ENCODE measurements at regions of chr9 and their contacts with region 1.

Region 1: DNA sequence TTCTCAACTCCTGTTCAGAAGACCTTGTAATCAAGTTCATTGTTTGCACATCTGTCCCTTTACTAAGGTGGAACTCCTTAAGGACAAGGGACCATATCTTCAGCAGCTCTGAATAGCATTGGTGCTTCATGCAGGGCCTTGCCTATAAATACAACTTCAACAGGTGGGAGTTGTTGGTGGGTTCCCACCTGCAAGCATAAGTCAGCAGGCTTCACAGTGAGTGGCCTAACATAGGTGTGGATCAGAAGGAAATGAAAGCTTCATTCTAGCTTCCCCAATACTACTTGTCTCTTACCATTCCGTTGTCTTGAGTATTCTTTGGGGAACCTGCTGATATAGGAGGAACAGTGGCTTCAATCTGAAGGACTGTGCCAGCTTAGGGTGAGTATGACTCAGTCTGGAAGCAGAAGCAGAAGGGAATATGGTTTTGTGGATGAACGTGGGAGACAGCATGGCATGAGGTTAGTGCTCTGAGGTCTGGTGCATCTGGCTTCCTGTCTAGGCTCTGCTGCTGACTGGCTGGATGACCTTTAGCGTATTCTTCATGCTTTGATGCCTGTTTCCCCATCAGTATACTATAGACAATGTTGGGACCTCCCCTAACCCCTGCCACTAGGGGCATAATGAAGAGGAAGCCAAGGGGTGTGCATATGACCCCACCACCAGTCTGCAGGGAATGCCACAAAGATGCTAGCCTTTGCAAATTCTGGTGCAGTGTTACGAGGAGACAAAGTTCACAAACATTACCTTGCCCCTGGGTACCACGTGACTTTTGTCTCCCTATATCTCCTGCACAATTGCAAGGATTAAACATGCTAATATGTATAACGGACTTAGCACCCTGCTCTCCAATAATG is 192.3 kb downstream of the PALM2AKAP2 start:
- DNase-seq: peak; percentile 91
- ATAC-seq: peak; percentile 44
- H3K4me3 ChIP-seq: no peak overlapping the region
- H3K27ac ChIP-seq: peak overlapping the region; percentile 92
- H3K4me1 ChIP-seq: peaks cover 87% of the 10 kb centered on the region
- H3K27me3 ChIP-seq: no peaks in the 10 kb centered on the region
- CTCF ChIP-seq: peak; percentile 22 to 53 (median 42); a peak in 5 of 6 replicates
- EP300 ChIP-seq: no peak
- POLR2A ChIP-seq: peak; percentile 42
- RAD21 ChIP-seq: peak; percentile 41; the same call in 1 of the 2 replicates

Region 2: GRCh38 chr9:109411798-109412352 is 560.4 kb before region 1 on chr9:
- CTCF ChIA-PET with region 1: no interaction called
- POLR2A ChIA-PET with region 1: no interaction called
- RAD21 ChIA-PET with region 1: no interaction called
- SMC1A ChIA-PET with region 1: no interaction called
- in situ Hi-C with region 1: no loop called
- intact Hi-C with region 1: loop called (anchors 5 kb)
- DNase-seq: peak; percentile 75
- ATAC-seq: peak; percentile 55
- H3K4me3 ChIP-seq: no peak overlapping the region
- H3K27ac ChIP-seq: peak overlapping the region; percentile 77
- H3K4me1 ChIP-seq: peaks cover 52% of the 10 kb centered on the region
- H3K27me3 ChIP-seq: no peaks in the 10 kb centered on the region
- CTCF ChIP-seq: peak; percentile 94 to 97 (median 97); a peak in 5 of 6 replicates
- EP300 ChIP-seq: peak; percentile 92 to 96
- POLR2A ChIP-seq: no peak
- RAD21 ChIP-seq: peak; percentile 88

Region 3: GRCh38 chr9:109926421-109926869 is 45.8 kb before region 1 on chr9:
- CTCF ChIA-PET with region 1: interaction called, 4 read pairs
- POLR2A ChIA-PET with region 1: interaction called, 4 read pairs
- RAD21 ChIA-PET with region 1: interaction called, 43 read pairs
- SMC1A ChIA-PET with region 1: interaction called, 423 read pairs
- in situ Hi-C with region 1: no loop called
- intact Hi-C with region 1: no loop called
- DNase-seq: no peak
- ATAC-seq: peak; percentile 66
- H3K4me3 ChIP-seq: peak overlapping the region; percentile 8; the same call in 1 of the 2 replicates
- H3K27ac ChIP-seq: peak overlapping the region; percentile 45
- H3K4me1 ChIP-seq: peaks cover 10% of the 10 kb centered on the region
- H3K27me3 ChIP-seq: no peaks in the 10 kb centered on the region
- CTCF ChIP-seq: no peak
- EP300 ChIP-seq: no peak; a peak in 1 of 4 replicates
- POLR2A ChIP-seq: no peak
- RAD21 ChIP-seq: no peak

Region 4: GRCh38 chr9:109953813-109954497 is 18.3 kb before region 1 on chr9:
- CTCF ChIA-PET with region 1: interaction called, 18 read pairs
- POLR2A ChIA-PET with region 1: interaction called, 6 read pairs
- RAD21 ChIA-PET with region 1: interaction called, 26 read pairs
- SMC1A ChIA-PET with region 1: interaction called, 40 read pairs
- in situ Hi-C with region 1: no loop called
- intact Hi-C with region 1: no loop called
- DNase-seq: no peak
- ATAC-seq: no peak
- H3K4me3 ChIP-seq: no peak overlapping the region
- H3K27ac ChIP-seq: no peak overlapping the region
- H3K4me1 ChIP-seq: peaks cover 29% of the 10 kb centered on the region
- H3K27me3 ChIP-seq: no peaks in the 10 kb centered on the region
- CTCF ChIP-seq: 0 out of 6 replicates have a peak, but pooled peaks of 1 of the 3 experiments have one; percentile 18
- EP300 ChIP-seq: no peak
- POLR2A ChIP-seq: no peak
- RAD21 ChIP-seq: 0 out of 2 replicates have a peak, but pooled peaks have one; percentile 5

Region 5: DNA sequence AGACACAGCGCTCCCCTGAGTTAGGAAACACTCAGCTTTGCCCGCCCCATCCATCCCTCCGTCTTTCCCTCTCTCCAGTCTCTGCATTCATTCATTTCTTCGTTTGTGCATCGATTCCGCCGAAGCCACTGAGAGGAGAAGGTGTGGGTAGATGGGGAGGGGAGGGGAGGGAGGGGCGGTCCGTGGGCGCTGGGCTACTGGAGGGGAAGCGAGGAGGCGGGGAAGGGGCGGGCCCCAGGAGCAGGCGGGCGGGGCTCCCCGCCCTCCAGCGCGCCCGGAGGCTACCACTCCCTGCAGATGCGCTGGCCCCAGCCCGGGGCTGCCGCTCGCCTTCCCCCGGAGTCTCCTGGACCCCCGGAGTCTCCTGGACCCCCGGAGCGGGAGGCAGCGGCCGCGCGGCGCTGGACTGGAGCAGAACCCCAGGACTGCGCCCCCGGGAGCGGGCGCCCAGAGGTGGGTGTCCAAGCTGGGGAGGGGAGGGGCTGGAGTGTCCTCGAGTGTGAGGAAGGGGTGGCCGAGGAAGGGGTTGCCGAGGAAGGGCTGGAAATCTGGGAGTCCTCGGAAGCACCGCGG is 76.2 kb after region 1 on chr9:
- CTCF ChIA-PET with region 1: interaction called, 20 read pairs
- POLR2A ChIA-PET with region 1: interaction called, 59 read pairs
- RAD21 ChIA-PET with region 1: interaction called, 137 read pairs
- SMC1A ChIA-PET with region 1: interaction called, 30 read pairs
- in situ Hi-C with region 1: loop called (anchors 5 kb)
- intact Hi-C with region 1: loop called (anchors 1 kb)
- DNase-seq: peak; percentile 56
- ATAC-seq: peak; percentile 90
- H3K4me3 ChIP-seq: peak overlapping the region; percentile 100
- H3K27ac ChIP-seq: peak overlapping the region; percentile 87
- H3K4me1 ChIP-seq: 0 out of 2 replicates have a peak, but pooled peaks cover 4% of the 10 kb centered on the region
- H3K27me3 ChIP-seq: no peaks in the 10 kb centered on the region; a peak in 1 of 4 replicates
- CTCF ChIP-seq: no peak
- EP300 ChIP-seq: no peak
- POLR2A ChIP-seq: peak; percentile 88
- RAD21 ChIP-seq: no peak

Region 6: DNA sequence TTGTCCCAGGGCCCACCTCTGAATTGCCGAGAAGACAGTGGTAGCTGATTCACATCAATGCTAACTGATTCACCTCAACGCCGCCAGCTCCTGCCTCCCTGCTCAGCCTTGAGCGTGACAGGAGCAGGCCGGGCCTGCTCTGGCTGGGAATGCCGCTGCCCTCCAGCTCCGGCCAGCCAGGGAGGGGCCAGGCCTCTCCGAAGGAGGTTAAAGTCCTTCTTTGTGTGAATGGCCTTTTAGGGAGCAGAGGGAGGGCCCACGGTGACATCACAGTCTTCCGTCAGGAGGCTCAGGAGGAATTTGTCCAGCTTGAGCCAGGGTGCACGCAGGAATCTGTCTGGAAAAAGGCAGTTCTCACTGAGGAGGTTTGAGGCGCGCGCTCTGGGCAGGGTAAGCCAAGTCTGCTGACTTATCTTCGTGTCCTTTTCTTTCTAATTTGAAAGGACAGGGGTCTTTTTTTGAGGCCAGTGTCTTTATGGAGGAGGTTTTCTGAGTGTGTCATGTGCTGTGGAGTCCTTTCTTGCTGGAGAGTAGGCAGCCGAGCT is 153.0 kb after region 1 on chr9:
- CTCF ChIA-PET with region 1: interaction called, 12 read pairs
- POLR2A ChIA-PET with region 1: interaction called, 12 read pairs
- RAD21 ChIA-PET with region 1: interaction called, 42 read pairs
- SMC1A ChIA-PET with region 1: interaction called, 88 read pairs
- in situ Hi-C with region 1: no loop called
- intact Hi-C with region 1: loop called (anchors 2 kb)
- DNase-seq: no peak
- ATAC-seq: no peak
- H3K4me3 ChIP-seq: no peak overlapping the region
- H3K27ac ChIP-seq: peak overlapping the region; percentile 29
- H3K4me1 ChIP-seq: peaks cover 58% of the 10 kb centered on the region
- H3K27me3 ChIP-seq: no peaks in the 10 kb centered on the region
- CTCF ChIP-seq: no peak
- EP300 ChIP-seq: no peak
- POLR2A ChIP-seq: no peak
- RAD21 ChIP-seq: no peak

Measured in GM12878 (cell line).